Mammary epithelial cell (primary cell): ENCODE measurements at regions of chr15 and their contacts with region 1.

Region 1: DNA sequence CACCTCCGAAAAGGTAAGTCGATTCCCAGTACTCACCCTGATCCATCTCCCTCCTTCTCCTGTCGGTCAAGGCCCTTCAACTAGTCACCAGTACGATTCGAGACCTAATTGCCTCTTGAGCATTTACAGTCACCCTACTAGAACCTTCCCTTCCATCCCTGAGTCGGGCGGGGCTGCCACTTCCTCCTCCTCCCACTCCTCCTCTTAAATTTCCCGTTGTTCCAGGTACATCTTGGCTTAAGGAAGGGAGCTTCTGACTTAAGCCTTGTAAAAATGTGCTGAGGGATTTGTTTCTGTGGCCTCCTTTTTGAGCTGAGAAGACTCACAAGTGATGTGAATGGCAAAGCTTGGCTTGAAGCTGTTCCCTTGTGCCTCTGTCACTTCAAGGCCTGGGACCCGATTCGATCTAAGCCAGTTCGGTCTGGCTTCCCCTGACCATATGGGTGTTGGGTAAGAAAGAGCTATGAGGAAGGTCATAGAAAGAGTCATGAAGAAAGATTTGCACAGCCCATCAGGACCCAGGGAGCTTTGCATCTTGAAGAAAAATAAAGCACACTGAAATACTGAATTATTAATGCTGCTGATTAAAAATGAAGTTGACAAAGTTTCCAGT is 28.1 kb downstream of the LCMT2 start:
- DNase-seq: no peak
- H3K4me3 ChIP-seq: no peak within 1 kb of the TSS
- H3K27ac ChIP-seq: no peak within 1 kb of the TSS
- H3K4me1 ChIP-seq: no peaks in the 10 kb centered on the region
- H3K27me3 ChIP-seq: no peaks in the 10 kb centered on the region
- CTCF ChIP-seq: no peak

Region 2: DNA sequence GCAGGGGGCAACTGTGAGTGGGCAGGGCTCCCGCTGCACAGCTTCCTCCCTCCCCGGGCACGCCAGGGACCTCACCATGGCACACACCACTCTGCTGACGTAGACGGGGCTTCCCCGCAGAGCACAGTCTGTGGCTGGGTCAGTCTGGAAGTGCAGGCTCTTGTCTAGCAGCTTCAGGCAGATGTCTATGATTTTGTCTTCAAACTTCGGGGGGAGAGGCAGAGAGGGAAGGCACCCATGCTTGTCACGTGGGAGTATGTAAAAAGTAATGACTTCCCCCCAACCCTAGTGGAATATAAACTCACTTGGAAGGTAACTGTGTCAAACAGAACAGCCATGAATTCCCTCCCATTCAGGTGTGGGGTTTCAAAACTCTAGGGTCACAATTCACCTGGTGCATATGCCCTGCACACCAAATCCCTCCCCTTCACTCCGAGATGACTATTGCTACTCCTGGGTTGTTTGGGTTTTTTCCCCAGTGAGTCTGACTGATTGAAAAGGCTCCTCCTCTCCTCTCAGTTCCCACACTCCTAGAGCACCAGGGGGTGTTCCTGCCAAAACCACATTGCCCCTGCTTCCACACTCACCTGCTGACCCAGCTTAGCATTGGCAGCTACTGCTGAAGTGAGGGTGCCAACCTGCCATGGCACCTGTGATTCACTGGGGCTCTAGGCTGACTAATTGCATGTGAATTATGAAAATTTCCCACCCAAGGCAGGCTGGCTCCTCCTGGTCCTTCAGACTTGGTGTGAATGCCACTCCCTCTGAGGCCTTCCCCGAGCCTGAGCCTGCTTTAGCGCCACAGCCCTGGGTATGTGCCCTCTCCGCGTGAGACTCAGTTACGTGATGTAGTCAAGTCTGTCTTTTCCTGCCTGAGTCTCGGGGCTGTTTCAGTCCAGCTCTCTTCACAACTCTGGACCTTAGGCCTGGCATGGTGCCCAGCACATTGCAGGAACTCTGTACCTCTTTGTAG is 48.6 kb before region 1 on chr15:
- CTCF ChIA-PET with region 1: no interaction called
- dilution Hi-C with region 1: loop called (anchors 5 kb)
- in situ Hi-C with region 1: no loop called
- intact Hi-C with region 1: no loop called
- DNase-seq: peak; percentile 98
- H3K4me3 ChIP-seq: no peak overlapping the region
- H3K27ac ChIP-seq: no peak overlapping the region
- H3K4me1 ChIP-seq: peaks cover 14% of the 10 kb centered on the region
- H3K27me3 ChIP-seq: no peaks in the 10 kb centered on the region
- CTCF ChIP-seq: no peak

Region 3: DNA sequence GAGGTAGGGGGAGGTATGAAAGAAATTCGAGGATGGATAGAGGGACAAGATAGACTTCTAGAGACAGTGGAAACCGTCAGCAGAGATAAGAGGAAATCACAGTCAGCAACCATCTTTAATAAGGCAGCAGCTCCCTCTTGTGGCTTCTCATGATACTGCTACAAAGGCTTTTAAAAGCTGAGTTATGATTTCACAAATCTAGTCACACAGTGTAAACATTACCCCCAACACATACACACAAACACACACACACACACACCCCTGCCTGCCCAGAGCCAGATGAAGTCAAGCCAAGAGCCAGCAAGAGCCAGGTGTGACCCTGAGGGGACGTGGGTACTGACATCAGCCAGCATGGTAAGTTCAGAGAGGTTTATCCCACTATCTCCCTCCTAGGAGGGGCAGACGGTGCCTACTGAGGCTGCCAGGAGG is 16.7 kb before region 1 on chr15:
- CTCF ChIA-PET with region 1: no interaction called
- dilution Hi-C with region 1: no loop called
- in situ Hi-C with region 1: no loop called
- intact Hi-C with region 1: no loop called
- DNase-seq: peak; percentile 46
- H3K4me3 ChIP-seq: no peak overlapping the region
- H3K27ac ChIP-seq: no peak overlapping the region
- H3K4me1 ChIP-seq: no peaks in the 10 kb centered on the region
- H3K27me3 ChIP-seq: no peaks in the 10 kb centered on the region
- CTCF ChIP-seq: peak; percentile 78 to 88